IMR-90 (cell line): ENCODE measurements at regions of chr18 and their contacts with region 1.

Region 1: GRCh38 chr18:72316497-72316896 is 227.6 kb downstream of the CBLN2 start:
- DNase-seq: no peak
- ATAC-seq: no peak
- H3K4me3 ChIP-seq: no peak overlapping the region
- H3K27ac ChIP-seq: no peak overlapping the region
- H3K4me1 ChIP-seq: no peaks in the 10 kb centered on the region
- H3K27me3 ChIP-seq: no peaks in the 10 kb centered on the region
- CTCF ChIP-seq: no peak
- POLR2A ChIP-seq: no peak
- RAD21 ChIP-seq: no peak

Region 2: DNA sequence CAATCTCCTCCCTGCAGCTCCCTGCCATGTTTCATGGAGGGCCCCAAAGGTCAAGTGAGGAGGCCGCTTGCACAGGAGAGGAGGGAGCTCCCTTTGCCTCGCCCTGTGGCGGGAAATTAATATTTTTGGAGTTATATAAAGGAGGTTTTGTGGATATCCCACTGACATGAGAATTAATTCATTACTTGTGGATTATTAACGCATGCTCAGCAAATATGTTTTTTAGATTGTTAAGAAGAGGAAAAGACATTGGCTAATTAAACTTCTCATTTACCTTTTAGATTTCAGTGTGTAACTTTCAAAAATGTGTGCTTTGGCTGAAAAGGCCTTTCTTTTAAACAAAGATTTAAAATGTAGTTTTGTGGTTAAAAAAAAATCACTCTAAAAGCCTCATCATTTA is 1553.7 kb before region 1 on chr18:
- CTCF ChIA-PET with region 1: no interaction called
- POLR2A ChIA-PET with region 1: no interaction called
- dilution Hi-C with region 1: no loop called
- in situ Hi-C with region 1: no loop called
- intact Hi-C with region 1: no loop called
- DNase-seq: no peak
- ATAC-seq: no peak
- H3K4me3 ChIP-seq: no peak overlapping the region
- H3K27ac ChIP-seq: no peak overlapping the region
- H3K4me1 ChIP-seq: no peaks in the 10 kb centered on the region
- H3K27me3 ChIP-seq: no peaks in the 10 kb centered on the region
- CTCF ChIP-seq: no peak
- POLR2A ChIP-seq: no peak
- RAD21 ChIP-seq: no peak

Region 3: DNA sequence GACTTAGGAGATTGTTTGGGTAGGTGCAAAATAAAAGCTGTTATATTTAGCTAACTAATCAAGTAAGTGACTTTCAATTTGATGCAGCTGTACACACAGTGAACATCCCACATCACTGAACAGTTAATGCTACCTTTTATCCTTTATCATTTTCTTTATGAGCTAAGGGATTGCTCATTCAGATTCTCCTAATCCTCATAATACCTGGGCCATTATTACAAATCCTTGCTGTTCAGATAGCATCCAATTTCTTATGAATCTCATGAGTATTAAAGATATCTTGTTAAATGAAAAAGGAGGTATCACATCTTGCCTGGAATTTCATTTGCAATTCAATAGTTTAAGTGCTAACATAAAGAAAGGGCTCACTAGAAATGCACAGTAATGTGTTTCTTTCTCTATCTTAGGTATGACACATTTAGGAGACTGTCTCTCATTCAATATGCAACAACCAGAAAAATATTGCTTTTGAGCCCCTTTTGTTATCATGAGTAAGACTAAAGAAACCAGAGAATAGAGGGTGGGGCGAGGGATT is 690.9 kb before region 1 on chr18:
- CTCF ChIA-PET with region 1: no interaction called
- POLR2A ChIA-PET with region 1: no interaction called
- dilution Hi-C with region 1: no loop called
- in situ Hi-C with region 1: no loop called
- intact Hi-C with region 1: no loop called
- DNase-seq: no peak
- ATAC-seq: no peak
- H3K4me3 ChIP-seq: no peak overlapping the region
- H3K27ac ChIP-seq: no peak overlapping the region
- H3K4me1 ChIP-seq: no peaks in the 10 kb centered on the region
- H3K27me3 ChIP-seq: no peaks in the 10 kb centered on the region
- CTCF ChIP-seq: no peak
- POLR2A ChIP-seq: no peak
- RAD21 ChIP-seq: no peak

Region 4: DNA sequence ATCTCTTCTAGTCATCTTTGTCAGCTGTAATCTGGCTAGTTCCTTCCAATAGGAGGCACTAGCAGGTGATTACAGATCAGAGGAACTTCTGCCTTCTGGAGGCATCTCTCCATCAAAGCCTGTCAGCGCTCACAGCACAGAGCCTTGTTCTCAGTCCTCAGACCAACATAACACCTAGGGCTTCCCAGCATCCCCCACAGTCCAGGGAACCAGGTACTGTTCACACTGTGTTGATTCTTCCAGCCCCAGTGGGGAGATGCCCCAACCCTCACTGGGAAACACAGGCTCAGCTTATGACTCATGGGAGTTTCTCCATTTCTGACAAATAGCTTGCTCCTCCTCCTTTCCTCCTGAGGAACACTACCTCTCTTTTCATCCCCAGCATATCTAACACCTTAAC is 374.1 kb before region 1 on chr18:
- CTCF ChIA-PET with region 1: no interaction called
- POLR2A ChIA-PET with region 1: interaction called, 10 read pairs
- dilution Hi-C with region 1: no loop called
- in situ Hi-C with region 1: no loop called
- intact Hi-C with region 1: no loop called
- DNase-seq: no peak
- ATAC-seq: no peak
- H3K4me3 ChIP-seq: no peak overlapping the region
- H3K27ac ChIP-seq: no peak overlapping the region
- H3K4me1 ChIP-seq: no peaks in the 10 kb centered on the region
- H3K27me3 ChIP-seq: no peaks in the 10 kb centered on the region
- CTCF ChIP-seq: no peak
- POLR2A ChIP-seq: no peak
- RAD21 ChIP-seq: no peak

Region 5: DNA sequence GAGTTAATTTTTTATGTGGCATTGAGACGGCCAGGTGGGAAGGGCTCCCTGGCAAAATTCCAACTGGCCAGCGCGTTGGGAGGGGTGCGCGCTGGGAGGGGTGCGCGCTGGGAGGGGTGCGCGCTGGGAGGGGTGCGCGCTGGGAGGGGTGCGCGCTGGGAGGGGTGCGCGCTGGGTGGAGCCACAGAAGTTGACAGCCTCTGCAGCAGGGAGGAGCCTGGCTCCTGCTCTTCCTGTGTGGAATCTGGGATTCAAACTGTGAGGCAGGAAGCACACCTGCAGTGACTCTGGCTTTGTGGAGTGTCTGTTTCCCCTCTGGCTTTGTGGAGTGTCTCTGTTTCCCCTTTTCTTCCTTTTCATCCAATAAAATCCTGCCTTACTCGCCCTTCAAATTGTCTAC is 375.6 kb after region 1 on chr18:
- CTCF ChIA-PET with region 1: no interaction called
- POLR2A ChIA-PET with region 1: no interaction called
- dilution Hi-C with region 1: no loop called
- in situ Hi-C with region 1: no loop called
- intact Hi-C with region 1: no loop called
- DNase-seq: no peak
- ATAC-seq: no peak
- H3K4me3 ChIP-seq: no peak overlapping the region
- H3K27ac ChIP-seq: no peak overlapping the region
- H3K4me1 ChIP-seq: no peaks in the 10 kb centered on the region
- H3K27me3 ChIP-seq: no peaks in the 10 kb centered on the region
- CTCF ChIP-seq: no peak
- POLR2A ChIP-seq: no peak
- RAD21 ChIP-seq: no peak